K562 (cell line): ENCODE measurements at regions of chr17 and their contacts with region 1.

Region 1: DNA sequence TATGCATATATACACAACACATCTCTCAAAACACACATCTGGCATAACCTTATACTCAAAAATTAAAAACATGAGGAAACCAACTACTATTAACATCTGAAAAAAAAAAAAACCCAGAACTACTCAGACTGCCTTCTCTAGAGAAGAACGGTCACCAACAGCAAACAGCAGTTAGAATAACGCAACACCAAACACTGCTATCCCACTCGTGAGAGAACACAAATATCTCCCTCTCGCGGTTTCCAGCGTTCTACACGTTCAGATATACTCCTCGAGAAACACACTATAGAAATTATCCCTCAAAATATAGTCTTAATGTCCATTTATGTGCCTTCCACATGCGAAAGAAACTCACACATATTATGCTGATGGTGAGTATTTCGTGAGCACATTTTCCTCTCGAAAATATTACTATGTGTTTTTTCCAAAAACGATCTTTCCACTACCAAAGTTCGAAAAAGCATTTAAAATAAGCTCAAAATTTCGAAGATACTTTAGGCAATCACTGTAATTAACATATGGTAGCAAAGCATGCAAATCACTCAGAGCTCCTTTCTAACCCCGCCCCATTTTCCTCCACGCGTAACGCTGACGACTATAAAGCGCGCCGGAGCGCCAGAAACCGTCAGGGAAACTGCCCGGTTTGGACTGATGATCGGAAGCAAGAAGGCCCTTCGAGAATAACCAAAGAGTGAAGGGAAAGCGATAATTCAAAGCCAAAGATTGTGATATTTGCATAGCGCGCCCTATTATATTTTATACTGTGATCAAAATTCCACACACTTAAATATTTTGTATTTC is 60.1 kb downstream of the TEX14 start:
- DNase-seq: peak; percentile 85 to 98 (median 86)
- ATAC-seq: peak; percentile 96
- H3K4me3 ChIP-seq: peak overlapping the region; percentile 35
- H3K27ac ChIP-seq: peak overlapping the region; percentile 94
- H3K4me1 ChIP-seq: peaks cover 0 to 8% of the 10 kb centered on the region in 2 experiments; a peak in 2 of 5 replicates
- H3K27me3 ChIP-seq: no peaks in the 10 kb centered on the region
- CTCF ChIP-seq: peak; percentile 15 to 31 (median 21); a peak in 1 of 6 replicates
- EP300 ChIP-seq: peak; percentile 78
- POLR2A ChIP-seq: peak; percentile 100
- RAD21 ChIP-seq: peak in 1 of 2 experiments; percentile 52; a peak in 1 of 4 replicates

Region 2: DNA sequence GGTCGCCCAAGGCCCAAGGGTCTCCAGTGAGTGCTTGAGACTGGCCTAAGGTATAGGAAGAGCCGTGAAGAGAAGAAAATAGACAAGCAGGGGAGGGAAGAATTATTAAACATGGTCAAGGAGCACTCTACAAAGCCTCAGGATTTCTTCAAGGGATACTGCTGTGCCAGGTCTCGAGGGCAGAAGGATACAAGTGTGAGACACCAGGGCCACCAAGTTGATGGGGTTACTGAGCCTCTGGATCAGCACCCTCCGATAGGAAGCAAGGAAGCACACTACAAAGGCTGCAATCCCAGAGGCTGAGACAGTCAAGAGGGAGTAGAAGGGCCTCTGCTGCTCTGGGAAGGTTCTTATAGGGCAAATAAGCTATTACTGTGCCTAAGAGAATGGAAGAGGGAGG is 286.2 kb before region 1 on chr17:
- CTCF ChIA-PET with region 1: no interaction called
- POLR2A ChIA-PET with region 1: no interaction called
- in situ Hi-C with region 1: no loop called
- intact Hi-C with region 1: no loop called
- DNase-seq: no peak
- ATAC-seq: no peak
- H3K4me3 ChIP-seq: no peak overlapping the region
- H3K27ac ChIP-seq: no peak overlapping the region
- H3K4me1 ChIP-seq: peaks cover 3 to 6% of the 10 kb centered on the region in 2 experiments; a peak in 3 of 5 replicates
- H3K27me3 ChIP-seq: no peaks in the 10 kb centered on the region
- CTCF ChIP-seq: no peak
- EP300 ChIP-seq: no peak
- POLR2A ChIP-seq: no peak
- RAD21 ChIP-seq: no peak

Region 3: DNA sequence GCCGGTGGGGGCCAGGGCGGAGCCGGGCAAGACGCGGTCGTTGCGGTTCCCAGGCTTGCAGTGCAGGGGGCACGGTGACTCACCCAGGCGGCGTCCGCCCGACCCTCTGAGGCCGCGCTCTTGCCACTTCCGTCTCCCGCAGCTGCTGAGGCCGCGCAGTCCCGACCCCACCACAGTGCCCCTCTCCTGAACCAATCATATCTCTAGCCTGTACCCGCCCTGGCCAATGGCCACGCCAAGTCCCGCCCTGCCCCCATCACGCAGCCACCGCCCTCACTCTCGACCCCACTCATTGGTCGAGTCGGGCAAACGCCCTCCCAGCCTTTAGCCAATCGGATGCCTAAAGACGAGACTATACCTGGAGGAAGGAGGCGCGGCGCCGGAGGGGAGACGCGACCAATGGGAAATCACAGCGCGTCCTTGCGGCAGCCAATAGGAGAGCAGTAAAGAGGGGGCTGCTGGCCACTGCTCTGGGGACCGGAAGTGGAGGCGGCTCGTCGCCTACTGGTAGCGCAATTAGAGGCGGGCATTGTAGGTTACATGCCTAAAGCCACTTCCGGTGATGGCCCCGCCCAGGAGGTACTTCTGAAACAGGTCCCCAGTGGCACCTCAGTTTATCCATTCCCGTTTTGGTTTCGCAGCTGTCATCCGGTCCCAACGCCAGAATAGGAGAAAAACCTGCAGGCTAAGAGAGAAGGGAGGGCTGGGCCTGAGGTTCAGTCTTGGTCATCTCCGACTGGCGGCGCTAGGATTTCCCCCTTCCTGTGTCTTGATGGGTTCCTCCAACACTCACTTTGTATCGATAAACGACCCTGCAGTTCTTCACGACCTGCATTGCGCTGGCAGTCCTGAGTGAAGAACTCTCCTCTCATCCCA is 113.8 kb before region 1 on chr17:
- CTCF ChIA-PET with region 1: no interaction called
- POLR2A ChIA-PET with region 1: interaction called, 35 read pairs
- in situ Hi-C with region 1: no loop called
- intact Hi-C with region 1: loop called (anchors 1 kb)
- DNase-seq: peak; percentile 97 to 100 (median 98)
- ATAC-seq: peak; percentile 92
- H3K4me3 ChIP-seq: peak overlapping the region; percentile 83
- H3K27ac ChIP-seq: peak overlapping the region; percentile 89
- H3K4me1 ChIP-seq: peaks cover 29 to 30% of the 10 kb centered on the region in 2 experiments
- H3K27me3 ChIP-seq: no peaks in the 10 kb centered on the region
- CTCF ChIP-seq: no peak
- EP300 ChIP-seq: no peak; the same call in 1 of the 2 replicates
- POLR2A ChIP-seq: peak; percentile 77
- RAD21 ChIP-seq: no peak

Region 4: DNA sequence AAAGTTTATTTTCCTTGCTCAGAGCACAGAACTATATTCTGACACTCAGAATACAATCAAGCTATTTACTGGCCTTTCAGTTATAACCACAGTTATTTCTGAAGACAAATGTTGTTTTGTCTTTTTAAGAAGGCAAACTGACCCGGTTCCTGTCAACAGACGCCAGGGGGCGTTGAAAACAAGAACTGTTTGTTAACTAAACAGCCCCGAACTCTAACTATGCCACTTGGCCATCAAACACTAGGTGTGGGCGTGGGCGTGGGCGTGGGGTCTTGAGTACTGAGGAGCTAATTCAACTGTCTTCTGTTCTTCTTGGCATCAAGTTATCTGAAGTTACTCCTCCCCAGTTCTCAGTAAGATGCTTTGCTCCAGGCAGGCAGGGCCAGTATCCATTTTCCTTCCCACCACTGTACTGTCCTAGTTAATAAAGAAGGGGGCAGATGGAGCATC is 54.1 kb before region 1 on chr17:
- CTCF ChIA-PET with region 1: no interaction called
- POLR2A ChIA-PET with region 1: interaction called, 31 read pairs
- in situ Hi-C with region 1: no loop called
- intact Hi-C with region 1: no loop called
- DNase-seq: peak; percentile 57 to 78 (median 60)
- ATAC-seq: peak; percentile 78
- H3K4me3 ChIP-seq: no peak overlapping the region
- H3K27ac ChIP-seq: no peak overlapping the region
- H3K4me1 ChIP-seq: peaks cover 0 to 8% of the 10 kb centered on the region in 2 experiments; a peak in 3 of 5 replicates
- H3K27me3 ChIP-seq: no peaks in the 10 kb centered on the region
- CTCF ChIP-seq: peak; percentile 63 to 84 (median 71)
- EP300 ChIP-seq: no peak
- POLR2A ChIP-seq: no peak
- RAD21 ChIP-seq: peak; percentile 16 to 50

Region 5: DNA sequence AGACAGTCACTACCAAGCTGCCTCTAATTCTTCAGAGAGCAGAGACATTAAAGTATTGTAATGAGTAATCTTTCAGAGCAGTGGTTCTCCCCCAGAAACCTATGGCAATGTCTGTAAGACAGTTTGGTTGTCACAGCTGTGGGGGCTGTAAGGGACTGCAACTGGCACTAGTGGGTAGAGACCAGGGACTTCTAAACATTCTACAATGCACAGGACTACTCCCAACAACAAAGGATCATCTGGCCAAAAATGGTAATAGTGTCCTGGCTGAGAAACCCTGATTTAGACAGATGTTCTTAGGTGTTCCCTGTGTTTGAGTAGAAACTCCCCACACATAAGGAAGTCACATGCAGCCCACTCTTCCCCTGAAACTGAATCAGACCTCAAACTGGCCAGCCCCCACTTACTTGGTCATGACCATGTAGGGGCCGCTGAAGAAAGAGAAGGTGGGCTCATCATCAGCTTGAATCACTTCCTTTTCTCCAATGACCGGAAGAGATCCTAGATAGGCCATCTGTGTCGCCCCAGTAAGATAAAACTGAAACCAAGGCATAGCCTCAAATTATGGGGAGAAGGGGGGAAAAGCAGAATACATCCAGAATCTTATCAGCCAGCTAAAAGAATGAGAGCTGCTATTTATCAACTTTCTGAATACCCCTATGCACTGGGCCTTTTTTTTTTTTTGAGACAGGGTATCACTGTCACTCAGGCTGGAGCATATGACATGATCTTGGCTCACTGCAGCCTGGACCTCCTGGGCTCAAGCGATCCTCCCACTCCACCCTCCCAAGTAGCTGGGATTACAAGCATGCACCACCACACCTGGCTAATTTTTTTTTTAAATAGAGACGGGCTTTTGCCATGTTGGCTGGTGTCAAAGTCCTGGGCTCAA is 15.7 kb before region 1 on chr17:
- CTCF ChIA-PET with region 1: no interaction called
- POLR2A ChIA-PET with region 1: interaction called, 303 read pairs
- in situ Hi-C with region 1: no loop called
- intact Hi-C with region 1: no loop called
- DNase-seq: no peak
- ATAC-seq: no peak
- H3K4me3 ChIP-seq: no peak overlapping the region
- H3K27ac ChIP-seq: no peak overlapping the region
- H3K4me1 ChIP-seq: peaks cover 5 to 17% of the 10 kb centered on the region in 2 experiments; a peak in 4 of 5 replicates
- H3K27me3 ChIP-seq: peaks cover 0 to 8% of the 10 kb centered on the region in 2 experiments; a peak in 1 of 5 replicates
- CTCF ChIP-seq: no peak
- EP300 ChIP-seq: no peak
- POLR2A ChIP-seq: no peak
- RAD21 ChIP-seq: no peak

Region 6: GRCh38 chr17:58658804-58659713 is 27.3 kb after region 1 on chr17:
- CTCF ChIA-PET with region 1: no interaction called
- POLR2A ChIA-PET with region 1: interaction called, 281 read pairs
- in situ Hi-C with region 1: no loop called
- intact Hi-C with region 1: loop called (anchors 1 kb)
- DNase-seq: peak; percentile 81 to 96 (median 84)
- ATAC-seq: peak; percentile 97
- H3K4me3 ChIP-seq: peak overlapping the region; percentile 40
- H3K27ac ChIP-seq: peak overlapping the region; percentile 100
- H3K4me1 ChIP-seq: peaks cover 3 to 5% of the 10 kb centered on the region in 2 experiments; a peak in 2 of 5 replicates
- H3K27me3 ChIP-seq: no peaks in the 10 kb centered on the region
- CTCF ChIP-seq: peak in 2 of 3 experiments; percentile 17 to 18; a peak in 2 of 6 replicates
- EP300 ChIP-seq: peak; percentile 89
- POLR2A ChIP-seq: peak; percentile 100
- RAD21 ChIP-seq: peak; percentile 28 to 59; a peak in 3 of 4 replicates

Region 7: DNA sequence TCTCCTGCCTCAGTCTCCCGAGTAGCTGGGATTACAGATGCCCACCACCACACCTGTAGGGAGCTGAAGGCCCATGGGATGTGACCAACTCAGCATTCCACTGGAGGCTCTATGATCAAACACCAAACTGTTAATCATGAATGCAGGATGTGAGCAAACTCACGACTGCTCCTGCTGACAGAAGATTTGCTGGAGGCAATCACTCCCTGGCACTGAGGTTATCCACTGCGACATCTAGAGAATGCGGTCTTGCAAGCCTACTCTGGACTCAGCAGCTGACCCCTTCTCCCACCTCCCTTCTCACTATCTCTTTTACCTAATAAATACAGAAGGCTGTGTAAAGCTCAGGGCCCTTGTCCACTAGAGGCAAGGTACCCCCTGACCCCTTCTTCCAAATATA is 55.3 kb after region 1 on chr17:
- CTCF ChIA-PET with region 1: no interaction called
- POLR2A ChIA-PET with region 1: interaction called, 41 read pairs
- in situ Hi-C with region 1: no loop called
- intact Hi-C with region 1: loop called (anchors 1 kb)
- DNase-seq: no peak
- ATAC-seq: no peak
- H3K4me3 ChIP-seq: no peak overlapping the region
- H3K27ac ChIP-seq: no peak overlapping the region
- H3K4me1 ChIP-seq: peaks cover 0 to under 1% of the 10 kb centered on the region in 2 experiments; a peak in 2 of 5 replicates
- H3K27me3 ChIP-seq: no peaks in the 10 kb centered on the region
- CTCF ChIP-seq: no peak
- EP300 ChIP-seq: no peak
- POLR2A ChIP-seq: no peak
- RAD21 ChIP-seq: no peak

Region 8: DNA sequence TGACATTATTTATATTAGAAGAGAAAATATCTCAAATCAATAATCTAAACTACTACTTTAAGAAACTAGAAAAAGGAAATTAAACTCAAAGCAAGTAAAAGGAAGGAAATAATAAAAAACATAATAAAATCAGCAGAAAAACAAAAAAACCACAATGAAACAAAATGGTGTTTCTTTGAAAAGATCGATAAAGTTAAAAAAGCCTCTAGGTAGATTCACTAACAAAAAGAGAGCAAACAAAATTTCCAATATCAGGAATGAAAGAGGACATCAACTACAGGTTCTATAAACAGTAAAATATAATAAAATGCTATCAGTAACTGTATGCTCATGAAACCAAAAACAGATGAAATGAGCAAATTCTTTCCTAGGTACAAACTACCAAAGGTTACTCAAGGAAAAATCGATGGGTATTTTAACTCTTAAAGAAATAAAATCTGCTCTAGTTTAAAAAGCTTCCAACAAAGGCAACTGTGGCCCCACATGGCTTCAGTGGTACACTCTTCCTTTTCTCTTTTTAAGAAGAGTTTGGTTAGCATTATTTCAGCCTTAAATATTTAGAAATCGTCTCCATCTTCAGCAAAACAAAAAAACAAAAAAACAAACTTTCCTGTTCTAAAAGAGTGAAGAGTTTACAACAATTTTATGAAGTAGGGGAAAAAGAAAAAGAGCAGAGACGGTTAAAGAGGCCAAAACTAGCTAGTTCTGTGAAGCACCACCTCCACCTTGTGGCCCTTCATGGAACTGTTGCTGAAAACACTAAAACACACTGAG is 372.8 kb after region 1 on chr17:
- CTCF ChIA-PET with region 1: no interaction called
- POLR2A ChIA-PET with region 1: interaction called, 13 read pairs
- in situ Hi-C with region 1: no loop called
- intact Hi-C with region 1: no loop called
- DNase-seq: peak; percentile 52 to 78 (median 60)
- ATAC-seq: peak; percentile 90
- H3K4me3 ChIP-seq: no peak overlapping the region
- H3K27ac ChIP-seq: peak overlapping the region; percentile 24; the same call in 1 of the 3 replicates
- H3K4me1 ChIP-seq: peaks cover 0 to 2% of the 10 kb centered on the region in 2 experiments; a peak in 1 of 5 replicates
- H3K27me3 ChIP-seq: no peaks in the 10 kb centered on the region
- CTCF ChIP-seq: peak; percentile 75 to 89 (median 83)
- EP300 ChIP-seq: no peak
- POLR2A ChIP-seq: no peak
- RAD21 ChIP-seq: peak; percentile 95 to 97